ENCODE measurements at regions of chr2 and their contacts with region 1.

Region 1: DNA sequence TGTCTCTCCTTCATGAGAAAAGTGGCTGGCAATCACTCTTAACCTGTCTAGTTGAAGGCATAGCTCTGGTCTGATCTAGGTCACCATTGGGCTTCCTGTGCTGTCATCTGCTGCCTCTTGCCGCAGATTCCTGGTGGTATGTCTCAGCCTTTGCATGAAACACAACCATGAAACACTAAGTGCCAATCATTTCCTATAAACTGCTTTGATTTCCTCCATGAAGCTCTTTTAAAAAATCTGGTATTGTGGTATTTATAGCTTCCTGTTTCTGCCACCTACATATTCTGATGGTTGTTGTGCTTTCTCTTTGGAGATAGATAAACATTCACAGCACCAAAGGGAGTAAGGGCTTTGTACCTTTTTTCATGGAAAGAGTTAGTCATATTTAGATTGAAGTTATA is 120.0 kb upstream of the EPC2 start:
- DNase-seq: peak in 9 of 10 donors; percentile 39 to 90 (median 73)
- ATAC-seq: peak; percentile 84 to 94
- H3K4me3 Mint-ChIP-seq: peak overlapping the region; percentile 43 to 75 (median 60)
- H3K27ac Mint-ChIP-seq: peak overlapping the region; percentile 84 to 97 (median 96)
- H3K4me1 Mint-ChIP-seq: peaks cover 55 to 95% (median 92%) of the 10 kb centered on the region in 4 donors
- H3K27me3 Mint-ChIP-seq: no peaks in the 10 kb centered on the region

Region 2: GRCh38 chr2:148020111-148021058 is 504.1 kb before region 1 on chr2 and contains the start of gene ORC4:
- POLR2A ChIA-PET with region 1: interaction called, 15 read pairs
- DNase-seq: peak; percentile 88 to 99 (median 95)
- ATAC-seq: peak; percentile 84 to 85
- H3K4me3 Mint-ChIP-seq: peak within 1 kb of the TSS; percentile 90 to 100 (median 98)
- H3K27ac Mint-ChIP-seq: peak within 1 kb of the TSS; percentile 92 to 99 (median 98)
- H3K4me1 Mint-ChIP-seq: peaks cover 34 to 82% (median 73%) of the 10 kb centered on the region in 4 donors
- H3K27me3 Mint-ChIP-seq: no peaks in the 10 kb centered on the region
- polyA plus RNA-seq, gene ORC4: 40.9 to 51.8 (median 48.8) TPM

Region 3: GRCh38 chr2:148303161-148303560 is 221.4 kb before region 1 on chr2:
- POLR2A ChIA-PET with region 1: no interaction called
- DNase-seq: no peak
- ATAC-seq: no peak
- H3K4me3 Mint-ChIP-seq: no peak overlapping the region
- H3K27ac Mint-ChIP-seq: no peak overlapping the region
- H3K4me1 Mint-ChIP-seq: peaks cover 0 to 5% (median 1%) of the 10 kb centered on the region in 4 donors
- H3K27me3 Mint-ChIP-seq: no peaks in the 10 kb centered on the region

Region 4: DNA sequence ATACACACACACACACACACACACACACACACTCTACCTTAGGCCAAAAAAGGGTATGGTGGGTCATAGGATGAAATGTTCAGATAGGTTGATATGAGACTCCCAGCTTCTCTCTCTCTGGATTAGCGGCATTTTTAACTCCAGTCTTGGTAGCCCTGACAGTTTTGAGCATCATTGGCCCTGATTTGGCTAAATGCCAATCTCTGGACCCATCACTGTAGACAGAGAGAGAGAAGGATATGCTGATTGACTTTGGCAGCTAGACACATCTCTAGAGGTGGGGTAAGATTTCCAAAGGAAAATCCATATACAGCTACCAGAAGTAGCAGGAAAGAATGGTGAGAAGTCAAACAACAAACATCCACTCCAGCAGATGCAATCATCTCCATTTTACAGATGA is 194.4 kb before region 1 on chr2:
- POLR2A ChIA-PET with region 1: no interaction called
- DNase-seq: no peak
- ATAC-seq: no peak
- H3K4me3 Mint-ChIP-seq: no peak overlapping the region
- H3K27ac Mint-ChIP-seq: no peak overlapping the region
- H3K4me1 Mint-ChIP-seq: peaks cover 0 to 3% (median 0%) of the 10 kb centered on the region in 4 donors
- H3K27me3 Mint-ChIP-seq: no peaks in the 10 kb centered on the region

Region 5: DNA sequence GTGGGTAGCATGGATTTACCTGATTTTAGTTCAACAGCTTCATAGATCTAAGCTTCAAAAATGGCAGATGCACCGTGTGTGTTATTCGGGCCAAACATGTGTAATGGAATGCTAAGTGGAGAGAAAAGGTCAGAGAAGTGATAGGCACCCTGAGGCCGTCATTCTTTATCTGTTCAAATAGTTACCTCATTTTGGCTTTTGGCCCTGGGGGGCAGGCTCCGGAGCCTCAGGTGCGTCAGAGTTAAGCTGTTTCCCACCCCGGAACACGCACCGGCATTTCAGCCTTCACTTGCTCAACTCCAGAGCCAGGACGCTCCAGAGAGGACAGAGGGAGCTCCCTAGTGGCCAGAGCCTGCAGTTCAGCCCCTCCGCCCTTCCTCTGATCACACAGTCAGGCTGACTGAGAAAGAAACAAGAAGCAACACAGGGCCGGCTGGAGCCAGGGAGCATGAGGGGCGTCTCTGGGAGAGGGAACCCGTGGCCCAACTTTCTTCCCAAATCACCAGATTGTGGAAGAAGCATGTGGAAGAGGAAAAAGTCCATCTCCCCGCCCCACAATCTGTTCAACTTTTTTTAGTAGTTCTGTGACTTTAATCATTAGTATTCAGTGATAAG is 15.1 kb before region 1 on chr2:
- POLR2A ChIA-PET with region 1: interaction called, 17 read pairs
- DNase-seq: peak; percentile 62 to 92 (median 79)
- ATAC-seq: peak; percentile 99
- H3K4me3 Mint-ChIP-seq: peak overlapping the region; percentile 69 to 86 (median 78)
- H3K27ac Mint-ChIP-seq: peak overlapping the region; percentile 57 to 91 (median 85)
- H3K4me1 Mint-ChIP-seq: peaks cover 13 to 24% (median 20%) of the 10 kb centered on the region in 4 donors
- H3K27me3 Mint-ChIP-seq: no peaks in the 10 kb centered on the region

Region 6: GRCh38 chr2:148540022-148540421 is 15.5 kb after region 1 on chr2:
- POLR2A ChIA-PET with region 1: interaction called, 62 read pairs
- DNase-seq: peak in 3 of 10 donors; percentile 20 to 45 (median 40)
- ATAC-seq: peak; percentile 84 to 85
- H3K4me3 Mint-ChIP-seq: peak overlapping the region in 9 of 10 donors; percentile 25 to 83 (median 70)
- H3K27ac Mint-ChIP-seq: peak overlapping the region; percentile 71 to 95 (median 88)
- H3K4me1 Mint-ChIP-seq: peaks cover 29 to 57% (median 48%) of the 10 kb centered on the region in 4 donors
- H3K27me3 Mint-ChIP-seq: no peaks in the 10 kb centered on the region

Region 7: GRCh38 chr2:148552675-148553331 is 28.3 kb after region 1 on chr2:
- POLR2A ChIA-PET with region 1: interaction called, 90 read pairs
- DNase-seq: peak in 6 of 10 donors; percentile 32 to 60 (median 42)
- ATAC-seq: peak; percentile 86 to 93
- H3K4me3 Mint-ChIP-seq: no peak overlapping the region
- H3K27ac Mint-ChIP-seq: no peak overlapping the region
- H3K4me1 Mint-ChIP-seq: peaks cover 1 to 7% (median 4%) of the 10 kb centered on the region in 4 donors
- H3K27me3 Mint-ChIP-seq: no peaks in the 10 kb centered on the region

Region 8: GRCh38 chr2:148644883-148645538 is 120.5 kb after region 1 on chr2:
- POLR2A ChIA-PET with region 1: interaction called, 52 read pairs
- DNase-seq: peak; percentile 88 to 100 (median 94)
- ATAC-seq: peak; percentile 67 to 70
- H3K4me3 Mint-ChIP-seq: peak overlapping the region; percentile 88 to 98 (median 94)
- H3K27ac Mint-ChIP-seq: peak overlapping the region; percentile 89 to 100 (median 97)
- H3K4me1 Mint-ChIP-seq: peaks cover 21 to 47% (median 40%) of the 10 kb centered on the region in 4 donors
- H3K27me3 Mint-ChIP-seq: peaks cover 0 to 5% (median 0%) of the 10 kb centered on the region in 5 donors

Measured in naive thymus-derived CD8-positive, alpha-beta T cell (primary cell).